Activated naive CD8-positive, alpha-beta T cell treated with anti-CD3 and anti-CD28 coated beads, Interleukin-2, amount 10 ng/mL, durations not matched to agents 7 days and 5 days (primary cell): ENCODE measurements at regions of chr20 and their contacts with region 1.

Region 1: GRCh38 chr20:53872561-53873229 is 197.7 kb downstream of the BCAS1 start:
- DNase-seq: no peak
- ATAC-seq: peak; percentile 54
- H3K4me3 Mint-ChIP-seq: peak overlapping the region; percentile 88
- H3K27ac Mint-ChIP-seq: peak overlapping the region; percentile 96
- H3K4me1 Mint-ChIP-seq: peaks cover 47% of the 10 kb centered on the region
- H3K27me3 Mint-ChIP-seq: no peaks in the 10 kb centered on the region

Region 2: GRCh38 chr20:53708129-53708968 is 164.3 kb before region 1 on chr20:
- POLR2A ChIA-PET with region 1: interaction called, 11 read pairs
- DNase-seq: no peak
- ATAC-seq: peak; percentile 60
- H3K4me3 Mint-ChIP-seq: peak overlapping the region; percentile 82
- H3K27ac Mint-ChIP-seq: peak overlapping the region; percentile 94
- H3K4me1 Mint-ChIP-seq: peaks cover 50% of the 10 kb centered on the region
- H3K27me3 Mint-ChIP-seq: no peaks in the 10 kb centered on the region

Region 3: GRCh38 chr20:53718142-53719021 is 154.3 kb before region 1 on chr20:
- POLR2A ChIA-PET with region 1: no interaction called
- DNase-seq: no peak
- ATAC-seq: no peak
- H3K4me3 Mint-ChIP-seq: no peak overlapping the region
- H3K27ac Mint-ChIP-seq: no peak overlapping the region
- H3K4me1 Mint-ChIP-seq: peaks cover 19% of the 10 kb centered on the region
- H3K27me3 Mint-ChIP-seq: no peaks in the 10 kb centered on the region

Region 4: DNA sequence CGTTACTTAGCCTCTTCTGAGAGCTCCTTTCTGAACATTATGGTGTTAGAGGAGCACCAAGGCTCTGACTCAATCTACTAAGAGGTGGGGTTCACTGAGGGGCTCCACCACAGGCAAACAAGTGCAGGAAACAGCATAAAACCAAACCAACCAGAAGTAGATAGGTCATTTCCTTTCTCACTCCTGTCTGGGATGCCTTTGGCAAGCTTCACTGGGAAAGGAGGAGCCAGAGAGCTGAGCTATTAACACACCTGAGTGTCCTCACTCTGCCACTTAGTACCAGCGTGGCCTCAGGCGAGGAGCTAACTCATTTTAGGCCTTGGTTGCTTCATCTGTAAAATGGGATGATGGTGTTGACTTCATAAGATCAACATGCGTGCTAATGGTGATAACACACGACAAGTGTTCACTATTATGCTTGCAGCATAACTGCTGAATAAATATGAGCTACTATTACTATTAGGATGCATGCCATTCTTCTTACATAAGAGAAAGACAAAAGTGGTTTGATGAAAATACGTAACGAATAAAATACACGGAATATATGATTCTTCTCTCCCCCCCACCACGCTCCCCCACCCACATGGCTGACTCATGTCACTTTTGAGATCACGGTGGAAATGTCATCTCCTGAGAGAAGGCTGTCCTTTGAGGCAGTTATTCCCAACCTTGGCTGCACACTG is 12.3 kb after region 1 on chr20:
- POLR2A ChIA-PET with region 1: interaction called, 25 read pairs
- DNase-seq: peak; percentile 55
- ATAC-seq: peak; percentile 91
- H3K4me3 Mint-ChIP-seq: peak overlapping the region; percentile 87
- H3K27ac Mint-ChIP-seq: peak overlapping the region; percentile 96
- H3K4me1 Mint-ChIP-seq: peaks cover 54% of the 10 kb centered on the region
- H3K27me3 Mint-ChIP-seq: no peaks in the 10 kb centered on the region

Region 5: DNA sequence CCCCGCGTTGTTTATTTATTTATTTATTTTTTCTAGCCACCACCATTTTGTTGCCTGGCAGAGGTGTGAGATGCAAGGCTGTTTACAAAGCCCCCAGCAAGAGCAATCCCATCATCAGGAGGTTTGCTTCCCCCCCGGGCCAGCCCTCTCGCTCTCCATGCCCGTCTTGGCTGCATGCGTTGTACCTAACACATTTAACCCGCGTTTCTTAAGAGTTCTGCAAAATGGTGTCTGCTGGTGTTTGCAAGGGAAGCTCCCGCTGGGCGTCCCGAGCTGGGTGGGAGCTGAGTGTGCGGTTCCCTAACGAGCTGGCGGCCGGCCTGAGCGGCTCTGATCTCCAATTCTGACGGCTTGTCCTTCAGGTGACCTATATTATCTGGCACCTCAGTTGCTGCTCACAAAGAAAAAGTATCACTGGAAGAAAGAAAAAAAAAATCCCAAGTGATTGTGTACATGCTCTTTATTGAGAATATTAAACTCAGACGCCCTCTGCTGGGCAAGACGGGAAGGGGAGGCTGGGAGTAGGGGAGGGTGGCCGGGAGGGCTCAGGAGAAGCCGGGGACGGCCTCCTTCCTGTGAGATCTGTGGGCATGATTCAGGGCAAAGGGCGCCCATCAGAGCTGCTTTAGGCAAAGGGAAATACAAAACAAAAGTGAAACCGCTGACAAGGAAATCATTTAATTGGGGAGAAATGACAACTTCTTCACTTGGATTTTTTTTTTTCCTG is 42.9 kb after region 1 on chr20:
- POLR2A ChIA-PET with region 1: interaction called, 27 read pairs
- DNase-seq: peak; percentile 92
- ATAC-seq: peak; percentile 99
- H3K4me3 Mint-ChIP-seq: peak overlapping the region; percentile 86
- H3K27ac Mint-ChIP-seq: peak overlapping the region; percentile 85
- H3K4me1 Mint-ChIP-seq: peaks cover 32% of the 10 kb centered on the region
- H3K27me3 Mint-ChIP-seq: no peaks in the 10 kb centered on the region